HAP-1 (cell line): ENCODE measurements at regions of chr4 and their contacts with region 1.

Region 1: GRCh38 chr4:74671080-74671698 is 123.1 kb downstream of the BTC start:
- DNase-seq: peak; percentile 46 to 61
- H3K4me3 ChIP-seq: no peak overlapping the region
- H3K4me1 ChIP-seq: peaks cover 7% of the 10 kb centered on the region
- H3K27me3 ChIP-seq: peaks cover 18% of the 10 kb centered on the region

Region 2: GRCh38 chr4:74282926-74283325 is 388.3 kb before region 1 on chr4:
- in situ Hi-C with region 1: no loop called
- DNase-seq: no peak
- H3K4me3 ChIP-seq: no peak overlapping the region
- H3K4me1 ChIP-seq: no peaks in the 10 kb centered on the region
- H3K27me3 ChIP-seq: 0 out of 2 replicates have a peak, but pooled peaks cover 2% of the 10 kb centered on the region

Region 3: GRCh38 chr4:74293558-74293957 is 377.6 kb before region 1 on chr4:
- in situ Hi-C with region 1: no loop called
- DNase-seq: no peak
- H3K4me3 ChIP-seq: no peak overlapping the region
- H3K4me1 ChIP-seq: no peaks in the 10 kb centered on the region
- H3K27me3 ChIP-seq: no peaks in the 10 kb centered on the region

Region 4: DNA sequence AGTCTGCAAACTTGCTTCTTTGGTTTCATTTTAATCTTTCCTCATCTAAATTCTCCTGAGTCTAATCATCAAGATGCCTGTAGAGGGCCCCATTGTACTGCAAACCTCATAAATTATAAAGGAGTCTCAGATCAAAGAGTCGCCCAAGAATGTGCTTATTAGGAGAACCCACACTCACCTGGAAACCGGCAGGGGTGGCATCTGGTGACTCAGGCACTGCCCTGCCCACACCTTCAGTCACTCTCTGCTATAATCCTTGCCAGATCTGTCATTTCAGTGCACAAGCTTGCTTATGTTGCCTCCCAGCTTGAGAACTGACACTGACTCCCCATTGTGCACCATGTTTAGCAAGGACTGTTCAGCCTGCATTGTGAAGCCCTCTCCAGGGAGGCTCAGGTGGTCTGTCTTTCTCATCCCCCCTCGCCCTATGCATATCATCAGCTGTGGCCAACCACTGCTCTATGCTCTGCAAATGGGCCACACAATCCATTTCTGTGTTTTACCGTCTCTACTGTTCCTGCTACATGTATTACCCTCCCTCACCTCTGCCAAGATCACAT is 350.6 kb before region 1 on chr4:
- in situ Hi-C with region 1: loop called (anchors 25 kb)
- DNase-seq: peak; percentile 12 to 41
- H3K4me3 ChIP-seq: no peak overlapping the region
- H3K4me1 ChIP-seq: no peaks in the 10 kb centered on the region
- H3K27me3 ChIP-seq: peaks cover 22% of the 10 kb centered on the region